MCF 10A (cell line): ENCODE measurements at regions of chr2 and their contacts with region 1.

Region 1: GRCh38 chr2:172972005-172972619 is 103.5 kb upstream of the MAP3K20 start:
- DNase-seq: peak; percentile 79
- H3K4me3 Mint-ChIP-seq: no peak overlapping the region
- H3K27ac Mint-ChIP-seq: no peak overlapping the region
- H3K4me1 Mint-ChIP-seq: peaks cover 35% of the 10 kb centered on the region
- H3K27me3 Mint-ChIP-seq: peaks cover 13% of the 10 kb centered on the region
- CTCF ChIP-seq: peak; percentile 80

Region 2: GRCh38 chr2:172909454-172909853 is 62.7 kb before region 1 on chr2:
- CTCF ChIA-PET with region 1: no interaction called
- POLR2A ChIA-PET with region 1: no interaction called
- intact Hi-C with region 1: no loop called
- DNase-seq: no peak
- H3K4me3 Mint-ChIP-seq: no peak overlapping the region
- H3K27ac Mint-ChIP-seq: no peak overlapping the region
- H3K4me1 Mint-ChIP-seq: no peaks in the 10 kb centered on the region
- H3K27me3 Mint-ChIP-seq: no peaks in the 10 kb centered on the region
- CTCF ChIP-seq: no peak

Region 3: GRCh38 chr2:172995323-172996244 is 23.5 kb after region 1 on chr2:
- CTCF ChIA-PET with region 1: interaction called, 4 read pairs
- POLR2A ChIA-PET with region 1: interaction called, 14 read pairs
- intact Hi-C with region 1: no loop called
- DNase-seq: peak; percentile 84
- H3K4me3 Mint-ChIP-seq: no peak overlapping the region
- H3K27ac Mint-ChIP-seq: peak overlapping the region; percentile 83
- H3K4me1 Mint-ChIP-seq: peaks cover 19% of the 10 kb centered on the region
- H3K27me3 Mint-ChIP-seq: no peaks in the 10 kb centered on the region
- CTCF ChIP-seq: no peak

Region 4: GRCh38 chr2:173021939-173022371 is 49.8 kb after region 1 on chr2:
- CTCF ChIA-PET with region 1: interaction called, 47 read pairs
- POLR2A ChIA-PET with region 1: interaction called, 5 read pairs
- intact Hi-C with region 1: loop called (anchors 1 kb)
- DNase-seq: peak; percentile 74
- H3K4me3 Mint-ChIP-seq: no peak overlapping the region
- H3K27ac Mint-ChIP-seq: no peak overlapping the region
- H3K4me1 Mint-ChIP-seq: peaks cover 6% of the 10 kb centered on the region
- H3K27me3 Mint-ChIP-seq: no peaks in the 10 kb centered on the region
- CTCF ChIP-seq: peak; percentile 58